K562 (cell line): ENCODE measurements at regions of chr7 and their contacts with region 1.

Region 1: DNA sequence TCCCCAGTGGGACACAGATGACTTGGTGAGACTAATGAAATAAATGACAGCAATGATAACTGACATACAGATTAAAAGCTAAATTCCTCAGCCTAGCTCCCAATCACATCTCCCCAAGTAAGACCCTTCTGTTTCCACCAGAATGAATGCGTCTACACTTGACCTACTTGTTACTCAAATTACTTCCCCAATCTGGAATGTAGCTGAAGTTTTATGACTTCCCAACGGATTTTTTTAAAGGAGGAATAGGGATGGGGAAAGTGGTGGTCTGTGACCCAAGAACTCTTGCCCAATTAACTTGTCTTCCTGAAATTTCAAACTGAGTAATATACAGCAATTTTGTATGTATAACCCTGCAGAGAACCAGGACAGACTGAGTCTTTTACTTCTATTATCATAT is 9.1 kb downstream of the H2AZ2 start:
- DNase-seq: no peak
- ATAC-seq: no peak
- H3K4me3 ChIP-seq: no peak overlapping the region
- H3K27ac ChIP-seq: no peak overlapping the region
- H3K4me1 ChIP-seq: no peaks in the 10 kb centered on the region; a peak in 1 of 5 replicates
- H3K27me3 ChIP-seq: no peaks in the 10 kb centered on the region
- CTCF ChIP-seq: no peak
- EP300 ChIP-seq: no peak
- POLR2A ChIP-seq: no peak
- RAD21 ChIP-seq: no peak

Region 2: GRCh38 chr7:44824894-44825526 is 13.7 kb before region 1 on chr7:
- CTCF ChIA-PET with region 1: no interaction called
- POLR2A ChIA-PET with region 1: interaction called, 15 read pairs
- in situ Hi-C with region 1: no loop called
- intact Hi-C with region 1: no loop called
- DNase-seq: no peak
- ATAC-seq: peak; percentile 54
- H3K4me3 ChIP-seq: no peak overlapping the region
- H3K27ac ChIP-seq: no peak overlapping the region
- H3K4me1 ChIP-seq: peaks cover 4 to 19% of the 10 kb centered on the region in 2 experiments; a peak in 4 of 5 replicates
- H3K27me3 ChIP-seq: no peaks in the 10 kb centered on the region
- CTCF ChIP-seq: no peak
- EP300 ChIP-seq: no peak
- POLR2A ChIP-seq: no peak
- RAD21 ChIP-seq: 0 out of 4 replicates have a peak, but pooled peaks have one; percentile 7 to 17